Heart left ventricle (tissue), 16 donors: ENCODE measurements at regions of chr20 and their contacts with region 1.

Region 1: GRCh38 chr20:59782986-59783640 is 150.3 kb downstream of the SYCP2 start:
- DNase-seq: peak in 3 of 5 donors; percentile 39 to 61 (median 51)
- ATAC-seq: peak; percentile 24 to 66 (median 53)
- H3K4me3 ChIP-seq: no peak overlapping the region
- H3K27ac ChIP-seq: no peak overlapping the region
- H3K4me1 ChIP-seq: no peaks in the 10 kb centered on the region
- H3K27me3 ChIP-seq: peaks cover 0 to 4% (median 0%) of the 10 kb centered on the region in 9 donors
- CTCF ChIP-seq: peak; percentile 73 to 89 (median 83)
- POLR2A ChIP-seq: no peak

Region 2: DNA sequence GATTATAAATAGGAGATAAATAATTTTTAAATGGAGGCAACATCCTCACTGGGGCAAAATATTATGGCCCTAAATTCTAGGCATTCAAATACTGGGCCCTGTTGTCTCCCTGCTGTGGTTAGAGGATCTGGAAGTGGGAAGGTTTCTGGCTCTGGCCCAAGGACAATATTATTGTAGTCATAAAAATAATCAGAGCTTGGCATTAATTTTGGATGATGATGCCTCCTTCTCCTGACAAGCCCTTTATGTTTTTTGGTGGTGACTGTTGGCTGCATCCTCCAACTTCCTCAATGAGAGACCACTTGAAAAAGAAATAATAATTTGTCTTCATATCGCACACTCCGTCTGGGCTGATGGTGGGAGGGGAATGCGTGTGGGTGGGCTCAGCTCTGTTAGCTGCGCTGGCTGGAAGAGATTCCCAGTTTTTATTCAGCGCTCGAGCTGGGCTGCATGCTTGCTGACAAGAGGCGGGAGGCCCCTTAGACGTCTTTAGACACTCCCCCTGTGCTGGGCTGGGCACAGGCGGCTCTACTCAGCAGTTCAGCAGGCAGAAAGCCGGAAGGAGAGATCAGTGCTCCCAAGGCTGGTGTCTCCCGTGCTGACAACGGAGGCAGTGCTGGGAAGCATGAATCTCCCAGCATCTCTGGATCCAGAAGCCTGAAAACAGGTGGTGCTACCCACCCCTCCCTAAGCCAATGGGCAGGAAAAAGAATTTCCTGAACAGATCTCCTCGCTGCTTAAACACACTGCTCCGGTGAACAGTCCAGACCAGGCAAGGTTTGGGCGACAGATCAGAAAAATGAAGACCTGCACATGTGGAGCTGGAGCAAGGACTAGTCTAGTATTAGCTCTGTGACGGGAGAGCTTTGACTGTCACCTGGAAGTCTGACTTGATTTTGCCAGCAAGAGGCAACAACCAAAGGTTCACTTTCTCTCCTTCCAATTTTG is 52.6 kb after region 1 on chr20:
- intact Hi-C with region 1: loop called in 1 of 10 experiments (anchors 2 kb)
- DNase-seq: peak in 4 of 5 donors; percentile 37 to 63 (median 52)
- ATAC-seq: peak; percentile 60 to 79 (median 76)
- H3K4me3 ChIP-seq: peak overlapping the region in 10 of 12 donors; percentile 1 to 50 (median 34)
- H3K27ac ChIP-seq: peak overlapping the region in 6 of 12 donors; percentile 24 to 70 (median 50)
- H3K4me1 ChIP-seq: peaks cover 0 to 55% (median 24%) of the 10 kb centered on the region in 12 donors
- H3K27me3 ChIP-seq: no peaks in the 10 kb centered on the region
- CTCF ChIP-seq: no peak
- POLR2A ChIP-seq: no peak

Region 3: GRCh38 chr20:59850018-59850641 is 67.0 kb after region 1 on chr20:
- intact Hi-C with region 1: loop called (anchors 1 to 5 kb)
- DNase-seq: no peak
- ATAC-seq: peak in 1 of 4 donors; percentile 20
- H3K4me3 ChIP-seq: no peak overlapping the region
- H3K27ac ChIP-seq: no peak overlapping the region
- H3K4me1 ChIP-seq: no peaks in the 10 kb centered on the region
- H3K27me3 ChIP-seq: no peaks in the 10 kb centered on the region
- CTCF ChIP-seq: peak; percentile 62 to 78 (median 72)
- POLR2A ChIP-seq: no peak

Region 4: GRCh38 chr20:59933849-59934596 is 150.9 kb after region 1 on chr20:
- intact Hi-C with region 1: loop called in 1 of 10 experiments (anchors 10 kb)
- DNase-seq: peak; percentile 84 to 92 (median 86)
- ATAC-seq: peak; percentile 57 to 90 (median 90)
- H3K4me3 ChIP-seq: peak overlapping the region; percentile 66 to 87 (median 76)
- H3K27ac ChIP-seq: peak overlapping the region; percentile 43 to 91 (median 84)
- H3K4me1 ChIP-seq: peaks cover 0 to 48% (median 34%) of the 10 kb centered on the region in 12 donors
- H3K27me3 ChIP-seq: no peaks in the 10 kb centered on the region
- CTCF ChIP-seq: peak; percentile 93 to 99 (median 97)
- POLR2A ChIP-seq: peak in 1 of 2 donors; percentile 30

Region 5: GRCh38 chr20:60131375-60131774 is 348.3 kb after region 1 on chr20:
- intact Hi-C with region 1: no loop called
- DNase-seq: no peak
- ATAC-seq: peak in 2 of 4 donors; percentile 49 to 52
- H3K4me3 ChIP-seq: no peak overlapping the region
- H3K27ac ChIP-seq: no peak overlapping the region
- H3K4me1 ChIP-seq: peaks cover 0 to 23% (median 0%) of the 10 kb centered on the region in 12 donors
- H3K27me3 ChIP-seq: peaks cover 0 to 3% (median 0%) of the 10 kb centered on the region in 9 donors
- CTCF ChIP-seq: no peak
- POLR2A ChIP-seq: no peak

Region 6: DNA sequence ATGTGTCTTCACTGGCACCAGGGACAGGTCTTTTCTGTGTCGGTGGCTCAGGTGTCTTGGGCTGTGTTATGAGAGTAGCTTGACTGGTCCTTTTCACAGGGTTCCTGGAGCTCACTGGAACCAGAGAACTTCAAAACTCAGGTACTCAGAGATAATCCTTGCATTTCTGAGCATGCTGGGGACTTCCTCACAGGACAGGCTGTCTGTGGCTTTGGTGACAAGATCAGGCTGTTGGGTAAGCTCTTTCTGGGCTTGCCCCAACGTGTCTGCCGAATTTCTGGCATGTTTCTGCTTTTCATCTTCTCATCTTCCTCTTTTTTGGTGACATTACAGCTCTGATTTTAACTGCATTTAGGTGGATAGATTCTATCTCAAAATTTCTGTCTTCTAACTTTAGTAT is 445.1 kb after region 1 on chr20:
- intact Hi-C with region 1: no loop called
- DNase-seq: no peak
- ATAC-seq: peak in 1 of 4 donors; percentile 71
- H3K4me3 ChIP-seq: no peak overlapping the region
- H3K27ac ChIP-seq: peak overlapping the region in 1 of 12 donors; percentile 22
- H3K4me1 ChIP-seq: no peaks in the 10 kb centered on the region
- H3K27me3 ChIP-seq: peaks cover 0 to 2% (median 0%) of the 10 kb centered on the region in 9 donors
- CTCF ChIP-seq: no peak
- POLR2A ChIP-seq: no peak